A673 (cell line): ENCODE measurements at regions of chr2 and their contacts with region 1.

Region 1: GRCh38 chr2:215949991-215950404 is 63.4 kb downstream of the MREG start:
- DNase-seq: peak; percentile 75
- H3K4me3 ChIP-seq: no peak overlapping the region
- H3K27ac ChIP-seq: no peak overlapping the region
- H3K4me1 ChIP-seq: no peaks in the 10 kb centered on the region
- H3K27me3 ChIP-seq: no peaks in the 10 kb centered on the region
- CTCF ChIP-seq: peak; percentile 68

Region 2: DNA sequence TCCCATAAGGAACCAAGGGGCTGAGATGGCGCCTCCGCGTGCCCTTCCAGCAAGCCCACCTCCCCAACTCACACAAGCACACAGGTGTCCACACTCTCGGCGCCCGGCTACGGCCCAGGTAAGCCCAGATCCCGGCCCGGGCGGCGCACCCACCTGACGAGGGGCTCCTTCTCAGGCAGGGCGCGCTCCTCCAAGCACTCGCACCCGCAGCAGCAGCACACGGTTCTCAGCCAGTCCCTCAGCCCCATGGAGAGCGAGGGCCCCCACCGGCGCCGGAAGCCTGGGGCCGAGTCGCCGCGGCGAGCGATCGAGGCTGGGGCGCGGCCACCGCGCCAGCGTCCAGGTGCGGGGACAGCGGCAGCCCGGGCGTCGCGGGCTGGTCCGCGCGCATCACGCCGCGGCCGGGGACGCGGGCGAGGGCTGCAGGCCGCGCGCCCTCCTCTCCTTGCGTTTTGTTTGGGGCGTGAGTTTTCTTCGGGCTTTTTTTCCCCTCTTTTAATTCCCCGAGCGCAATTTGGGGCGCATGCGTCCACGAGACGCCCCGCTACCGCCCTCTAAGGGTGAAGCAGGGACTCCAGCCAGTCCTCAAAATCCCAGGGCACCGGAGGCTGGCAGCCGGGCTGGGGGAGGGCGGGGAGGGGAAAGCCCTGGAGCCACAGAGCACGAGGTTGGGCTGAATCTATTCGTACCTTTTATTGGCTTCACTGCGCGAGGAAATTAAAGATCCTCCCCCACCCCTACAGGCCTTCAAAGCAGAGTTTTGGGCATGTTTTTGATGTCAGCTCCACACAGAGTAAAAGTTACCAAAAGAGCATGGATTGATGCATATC is 63.3 kb after region 1 on chr2 and contains the start of gene MREG:
- CTCF ChIA-PET with region 1: interaction called, 3 read pairs
- POLR2A ChIA-PET with region 1: no interaction called
- intact Hi-C with region 1: loop called (anchors 5 kb)
- DNase-seq: peak; percentile 93
- H3K4me3 ChIP-seq: peak within 1 kb of the TSS; percentile 66
- H3K27ac ChIP-seq: peak within 1 kb of the TSS; percentile 21
- H3K4me1 ChIP-seq: no peaks in the 10 kb centered on the region
- H3K27me3 ChIP-seq: no peaks in the 10 kb centered on the region
- CTCF ChIP-seq: peak; percentile 77
- total RNA-seq, gene MREG: 14.9 and 15.9 TPM in 2 replicates